ENCODE measurements at regions of chr19 and their contacts with region 1.

Region 1: DNA sequence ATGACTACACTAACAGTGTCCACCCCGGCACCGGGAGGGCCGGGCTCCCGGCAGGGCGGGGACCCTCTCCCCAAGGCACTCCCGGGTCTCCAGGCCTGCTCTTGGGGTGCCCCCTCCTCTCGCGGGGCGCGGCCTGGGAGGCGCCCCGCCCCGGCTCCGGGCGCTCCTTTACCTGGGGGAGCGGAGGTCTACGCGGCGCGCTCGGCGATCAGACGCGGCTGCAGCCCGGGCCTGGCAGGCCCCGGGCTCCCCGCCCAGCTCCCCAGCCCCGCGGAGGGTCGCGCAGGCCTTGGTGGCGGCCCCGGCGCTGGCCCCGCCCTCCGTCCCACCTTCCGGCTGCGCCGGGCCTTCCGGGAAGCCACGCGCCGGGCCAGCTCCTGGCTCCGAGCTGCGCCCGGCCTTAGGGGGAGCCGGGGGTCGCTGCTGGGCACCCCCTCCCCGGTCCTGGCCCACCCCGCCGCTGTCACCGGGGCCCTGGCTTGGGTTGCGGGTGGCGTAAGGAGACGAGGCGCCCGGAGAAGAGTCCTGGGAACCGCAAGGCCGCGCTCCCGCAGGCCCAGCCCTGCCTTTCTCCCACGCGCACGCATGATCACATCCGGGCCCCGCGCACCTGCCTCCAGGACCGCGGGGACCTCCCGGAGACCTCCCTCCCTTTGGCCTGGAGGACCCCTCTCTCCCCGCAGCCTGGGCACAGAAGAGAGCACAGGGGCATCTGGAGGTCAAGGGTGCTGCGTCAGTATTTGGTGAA is at the start of gene C19orf12:
- DNase-seq: peak; percentile 25
- H3K4me3 ChIP-seq: peak within 1 kb of the TSS; percentile 54 to 73 (median 68)
- H3K27ac ChIP-seq: peak within 1 kb of the TSS; percentile 72
- H3K4me1 ChIP-seq: peaks cover 5% of the 10 kb centered on the region
- H3K27me3 ChIP-seq: no peaks in the 10 kb centered on the region
- CTCF ChIP-seq: no peak
- POLR2A ChIP-seq: peak; percentile 86
- total RNA-seq, gene C19orf12: 22.9 and 23.0 TPM in 2 replicates

Region 2: DNA sequence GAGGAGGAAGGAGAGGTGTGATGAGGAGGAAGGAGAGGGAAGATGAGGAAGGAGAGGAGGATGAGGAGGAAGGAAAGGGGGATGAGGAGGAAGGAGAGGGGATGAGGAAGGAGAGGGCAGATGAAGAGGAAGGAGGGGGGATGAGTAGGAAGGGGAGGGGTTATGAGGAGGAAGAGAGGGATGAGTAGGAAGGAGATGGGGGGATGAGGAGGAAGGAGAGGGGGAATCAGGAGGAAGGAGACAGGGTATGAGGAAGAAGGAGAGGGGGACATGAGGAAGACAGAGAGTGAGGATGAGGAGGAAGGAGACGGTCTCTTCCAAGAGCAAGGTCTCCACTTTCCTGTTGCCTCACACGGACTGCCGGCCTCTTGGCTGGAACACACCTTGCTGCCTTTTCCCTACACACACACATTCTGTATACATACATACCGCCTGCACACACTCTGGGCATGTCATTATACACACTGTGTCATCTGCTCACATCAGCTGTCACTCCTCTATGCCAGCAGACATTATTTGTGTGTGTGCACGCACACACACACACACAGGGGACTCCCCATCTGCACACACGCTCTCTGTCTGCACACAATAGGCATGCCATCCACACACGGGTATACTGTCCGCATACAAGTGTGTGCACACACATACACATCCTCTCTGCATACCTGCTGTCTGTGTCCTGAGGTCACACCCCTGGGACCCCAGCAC is 200.4 kb before region 1 on chr19:
- CTCF ChIA-PET with region 1: no interaction called
- POLR2A ChIA-PET with region 1: no interaction called
- dilution Hi-C with region 1: no loop called
- intact Hi-C with region 1: no loop called
- DNase-seq: no peak
- H3K4me3 ChIP-seq: no peak overlapping the region
- H3K27ac ChIP-seq: no peak overlapping the region
- H3K4me1 ChIP-seq: no peaks in the 10 kb centered on the region
- H3K27me3 ChIP-seq: no peaks in the 10 kb centered on the region
- CTCF ChIP-seq: no peak
- POLR2A ChIP-seq: no peak

Region 3: DNA sequence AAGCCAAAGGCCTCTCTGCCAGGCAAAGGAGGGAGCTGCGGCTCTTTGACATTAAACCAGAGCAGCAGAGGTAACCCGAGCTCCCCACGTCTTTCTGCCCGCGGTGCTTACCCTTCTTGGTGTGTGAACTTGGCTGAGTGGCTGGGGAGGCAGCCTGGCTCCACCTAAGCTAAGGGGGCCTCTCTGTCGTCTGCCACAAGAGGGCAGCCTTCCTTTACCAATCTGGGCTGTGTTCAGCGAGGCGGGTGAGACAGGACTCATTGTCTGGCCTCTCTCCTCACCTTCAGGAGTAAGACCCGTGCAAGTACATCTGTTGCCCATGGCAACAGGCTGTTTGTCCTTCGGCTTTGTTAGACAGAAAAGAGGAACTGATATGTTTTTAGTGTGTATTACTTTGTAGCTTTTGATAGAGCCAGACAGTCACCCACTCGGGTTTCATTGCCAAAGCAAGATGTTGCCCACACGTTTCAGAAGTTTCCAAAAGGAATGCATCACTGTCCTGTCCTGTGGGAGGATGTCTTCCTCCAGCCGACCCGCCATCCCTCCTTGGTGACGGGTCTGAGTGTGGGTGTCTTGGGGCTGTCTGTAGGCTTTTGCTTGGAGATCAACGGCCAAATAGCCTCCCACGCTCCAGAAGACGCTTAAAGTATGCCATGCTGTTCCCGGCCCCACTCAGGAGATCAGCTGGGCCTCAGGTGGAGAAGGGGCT is 104.4 kb before region 1 on chr19:
- CTCF ChIA-PET with region 1: interaction called, 210 read pairs
- POLR2A ChIA-PET with region 1: interaction called, 10 read pairs
- dilution Hi-C with region 1: no loop called
- intact Hi-C with region 1: loop called (anchors 1 kb)
- DNase-seq: peak; percentile 64
- H3K4me3 ChIP-seq: no peak overlapping the region
- H3K27ac ChIP-seq: no peak overlapping the region
- H3K4me1 ChIP-seq: peaks cover 5% of the 10 kb centered on the region
- H3K27me3 ChIP-seq: no peaks in the 10 kb centered on the region
- CTCF ChIP-seq: peak; percentile 79 to 94
- POLR2A ChIP-seq: no peak

Region 4: DNA sequence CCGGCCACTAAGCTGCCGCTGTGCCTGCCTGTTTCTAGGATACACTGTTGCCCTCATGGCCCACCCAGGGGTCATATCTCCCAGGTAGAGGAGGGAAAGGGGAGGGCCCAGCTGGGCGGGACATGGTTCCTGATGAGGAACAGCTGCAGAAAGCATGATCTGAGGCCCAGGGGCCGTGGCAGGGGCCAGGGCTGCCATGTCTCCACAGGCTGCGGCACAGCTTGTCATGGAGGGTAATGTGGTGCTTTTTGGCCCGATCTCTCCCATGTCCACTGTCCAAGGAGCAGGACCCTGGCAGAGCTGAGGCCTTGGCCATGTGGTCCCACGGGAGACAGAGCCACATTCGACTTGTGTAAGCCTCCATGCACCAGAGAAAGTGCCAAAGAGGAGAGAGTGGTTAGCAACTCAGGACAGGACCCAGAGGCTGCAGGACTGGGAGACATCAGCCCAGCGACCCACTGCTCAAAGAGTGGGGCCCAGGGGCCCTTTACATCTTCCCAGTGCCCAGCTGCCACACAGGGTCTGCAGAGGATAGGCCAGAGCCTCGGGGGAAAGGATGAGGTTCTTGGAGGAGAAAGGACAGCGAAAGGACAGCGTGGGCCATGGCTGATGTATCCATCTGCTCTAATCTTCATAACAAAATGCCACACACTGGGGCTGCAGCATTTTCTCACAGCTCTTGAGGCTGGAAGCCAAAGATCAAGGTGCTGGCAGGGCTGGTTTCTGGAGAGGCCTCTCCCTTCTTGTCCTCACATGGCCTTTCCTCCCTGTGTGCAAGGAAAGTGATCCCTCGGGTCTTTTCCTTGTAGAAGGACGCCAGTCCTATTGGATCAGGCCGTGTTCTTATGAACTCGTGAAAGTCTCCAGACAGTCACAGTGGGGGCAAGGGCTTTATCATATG is 97.5 kb before region 1 on chr19:
- CTCF ChIA-PET with region 1: interaction called, 210 read pairs
- POLR2A ChIA-PET with region 1: no interaction called
- dilution Hi-C with region 1: no loop called
- intact Hi-C with region 1: no loop called
- DNase-seq: no peak
- H3K4me3 ChIP-seq: no peak overlapping the region
- H3K27ac ChIP-seq: no peak overlapping the region
- H3K4me1 ChIP-seq: no peaks in the 10 kb centered on the region
- H3K27me3 ChIP-seq: no peaks in the 10 kb centered on the region
- CTCF ChIP-seq: no peak
- POLR2A ChIP-seq: no peak

Region 5: DNA sequence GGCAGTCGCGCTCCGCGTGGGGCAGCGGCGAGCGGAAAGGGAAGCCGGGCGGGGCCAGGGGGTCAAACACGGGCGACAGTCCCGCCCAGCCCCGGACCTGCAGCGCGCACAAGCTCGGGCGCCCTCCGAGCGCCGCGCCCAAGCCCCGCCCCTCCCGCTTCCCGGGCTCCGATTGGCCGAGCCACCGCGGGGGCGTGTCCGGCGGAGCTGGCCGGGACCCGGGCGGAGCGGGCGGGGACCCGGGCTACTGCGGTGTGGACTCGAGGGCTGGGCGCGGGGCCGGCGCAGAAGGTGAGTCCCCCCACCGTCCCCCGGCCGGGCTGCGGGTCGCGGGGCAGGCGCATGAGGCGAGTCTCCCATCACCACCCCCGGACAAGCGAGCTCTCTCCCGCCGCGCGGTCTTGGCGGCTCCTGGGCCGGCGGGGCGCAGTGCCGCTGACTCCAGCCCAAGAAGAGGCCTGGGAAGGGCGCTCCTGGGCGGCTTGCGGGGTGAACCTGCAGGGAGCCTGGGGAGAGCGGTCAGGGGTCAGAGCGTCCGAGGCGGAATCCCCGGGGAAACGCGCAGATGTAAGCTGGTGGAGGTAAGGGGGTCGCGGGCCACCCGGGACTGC is 49.8 kb before region 1 on chr19 and contains the start of gene PLEKHF1:
- CTCF ChIA-PET with region 1: interaction called, 37 read pairs
- POLR2A ChIA-PET with region 1: no interaction called
- dilution Hi-C with region 1: no loop called
- intact Hi-C with region 1: loop called (anchors 1 kb)
- DNase-seq: peak; percentile 83
- H3K4me3 ChIP-seq: peak within 1 kb of the TSS; percentile 55 to 81 (median 64)
- H3K27ac ChIP-seq: no peak within 1 kb of the TSS
- H3K4me1 ChIP-seq: peaks cover 29% of the 10 kb centered on the region
- H3K27me3 ChIP-seq: no peaks in the 10 kb centered on the region
- CTCF ChIP-seq: no peak
- POLR2A ChIP-seq: peak; percentile 37
- total RNA-seq, gene PLEKHF1: 4.0 and 5.5 TPM in 2 replicates

Region 6: GRCh38 chr19:29694669-29695627 is 20.2 kb before region 1 on chr19:
- CTCF ChIA-PET with region 1: interaction called, 39 read pairs
- POLR2A ChIA-PET with region 1: no interaction called
- dilution Hi-C with region 1: no loop called
- intact Hi-C with region 1: loop called (anchors 1 kb)
- DNase-seq: peak; percentile 51
- H3K4me3 ChIP-seq: no peak overlapping the region
- H3K27ac ChIP-seq: no peak overlapping the region
- H3K4me1 ChIP-seq: no peaks in the 10 kb centered on the region
- H3K27me3 ChIP-seq: no peaks in the 10 kb centered on the region
- CTCF ChIP-seq: peak; percentile 76 to 96
- POLR2A ChIP-seq: no peak

Region 7: DNA sequence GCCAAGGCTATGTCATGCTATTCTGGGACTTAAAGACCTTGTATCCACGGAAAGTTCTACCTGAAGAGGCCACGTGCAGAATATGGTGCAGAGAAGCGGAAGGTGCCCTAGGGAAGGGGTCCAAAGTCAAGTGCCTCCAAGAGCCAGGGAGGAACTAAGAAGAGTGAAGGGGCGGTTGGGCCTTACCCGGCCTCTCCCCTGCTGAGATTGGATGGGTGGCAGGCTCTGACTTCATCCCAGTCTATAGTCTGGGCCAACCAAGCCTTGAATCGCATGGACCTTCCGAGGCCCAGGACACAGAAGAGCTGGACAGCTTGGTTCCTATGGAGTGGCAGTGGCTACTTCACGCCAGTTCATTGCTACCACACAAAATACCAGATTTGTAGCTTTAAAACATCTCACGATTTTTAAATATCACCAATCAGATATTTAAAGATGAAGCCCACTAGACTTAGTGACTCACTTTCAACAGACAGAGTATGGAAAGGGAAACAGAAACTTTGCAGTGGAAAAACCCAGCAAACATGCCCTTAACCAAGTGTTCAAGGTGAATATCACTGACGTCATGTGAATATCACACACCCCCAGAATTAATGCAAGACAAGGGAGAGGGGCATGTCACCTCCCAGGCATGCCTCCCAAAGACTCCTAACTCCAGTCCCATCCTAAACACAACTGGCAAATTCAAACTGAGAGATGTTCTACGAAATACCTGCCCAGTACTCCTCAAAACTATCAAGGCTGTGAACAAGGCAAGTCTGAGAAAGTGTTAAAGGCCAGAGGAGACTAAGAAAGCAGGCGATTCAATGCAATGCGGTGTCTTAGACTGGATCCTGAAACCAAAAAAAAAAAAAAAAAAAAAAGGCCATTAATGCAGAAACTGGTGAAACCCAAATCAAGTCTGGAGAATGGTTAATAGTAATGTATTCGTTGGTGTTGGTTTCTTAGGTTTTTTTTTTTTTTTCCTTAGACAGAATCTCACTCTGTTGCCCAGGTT is 10.3 kb before region 1 on chr19:
- CTCF ChIA-PET with region 1: interaction called, 17 read pairs
- POLR2A ChIA-PET with region 1: no interaction called
- dilution Hi-C with region 1: no loop called
- intact Hi-C with region 1: no loop called
- DNase-seq: no peak
- H3K4me3 ChIP-seq: no peak overlapping the region
- H3K27ac ChIP-seq: no peak overlapping the region
- H3K4me1 ChIP-seq: no peaks in the 10 kb centered on the region
- H3K27me3 ChIP-seq: no peaks in the 10 kb centered on the region
- CTCF ChIP-seq: no peak
- POLR2A ChIP-seq: no peak

Region 8: GRCh38 chr19:29753190-29753933 is 38.2 kb after region 1 on chr19:
- CTCF ChIA-PET with region 1: no interaction called
- POLR2A ChIA-PET with region 1: no interaction called
- dilution Hi-C with region 1: no loop called
- intact Hi-C with region 1: no loop called
- DNase-seq: no peak
- H3K4me3 ChIP-seq: no peak overlapping the region
- H3K27ac ChIP-seq: no peak overlapping the region
- H3K4me1 ChIP-seq: no peaks in the 10 kb centered on the region
- H3K27me3 ChIP-seq: no peaks in the 10 kb centered on the region
- CTCF ChIP-seq: no peak
- POLR2A ChIP-seq: no peak

Region 9: GRCh38 chr19:29844891-29845572 is 129.9 kb after region 1 on chr19:
- CTCF ChIA-PET with region 1: interaction called, 12 read pairs
- POLR2A ChIA-PET with region 1: interaction called, 4 read pairs
- dilution Hi-C with region 1: no loop called
- intact Hi-C with region 1: no loop called
- DNase-seq: peak; percentile 88
- H3K4me3 ChIP-seq: peak overlapping the region; percentile 27 to 57 (median 46)
- H3K27ac ChIP-seq: no peak overlapping the region
- H3K4me1 ChIP-seq: peaks cover 8% of the 10 kb centered on the region
- H3K27me3 ChIP-seq: peaks cover 5 to 20% of the 10 kb centered on the region in 2 experiments
- CTCF ChIP-seq: no peak
- POLR2A ChIP-seq: no peak

Measured in endothelial cell of umbilical vein (primary cell).